ENCODE measurements at regions of chr4 and their contacts with region 1.

Region 1: DNA sequence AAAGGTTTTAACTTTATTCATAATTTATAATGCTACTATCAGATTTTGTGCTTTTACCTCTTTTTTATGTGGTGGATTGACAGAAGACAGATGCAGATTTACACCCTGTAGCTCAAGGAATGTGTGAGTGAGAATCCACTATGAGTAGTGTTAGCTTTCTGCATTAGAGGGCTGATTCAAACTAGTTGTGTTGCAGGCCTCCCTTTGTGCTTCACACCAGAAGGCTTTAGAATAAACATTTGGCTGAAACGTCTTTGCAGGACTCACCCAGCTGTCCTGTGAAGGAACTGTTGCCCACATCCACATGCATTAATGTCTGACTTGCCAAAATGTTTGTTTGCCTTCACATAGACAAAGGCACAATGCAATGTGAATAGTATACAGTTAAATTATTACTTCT is 127.0 kb downstream of the PCDH7 start:
- DNase-seq: no peak
- H3K4me3 ChIP-seq: no peak overlapping the region
- H3K27ac ChIP-seq: no peak overlapping the region
- H3K4me1 ChIP-seq: no peaks in the 10 kb centered on the region
- H3K27me3 ChIP-seq: no peaks in the 10 kb centered on the region
- CTCF ChIP-seq: no peak

Region 2: DNA sequence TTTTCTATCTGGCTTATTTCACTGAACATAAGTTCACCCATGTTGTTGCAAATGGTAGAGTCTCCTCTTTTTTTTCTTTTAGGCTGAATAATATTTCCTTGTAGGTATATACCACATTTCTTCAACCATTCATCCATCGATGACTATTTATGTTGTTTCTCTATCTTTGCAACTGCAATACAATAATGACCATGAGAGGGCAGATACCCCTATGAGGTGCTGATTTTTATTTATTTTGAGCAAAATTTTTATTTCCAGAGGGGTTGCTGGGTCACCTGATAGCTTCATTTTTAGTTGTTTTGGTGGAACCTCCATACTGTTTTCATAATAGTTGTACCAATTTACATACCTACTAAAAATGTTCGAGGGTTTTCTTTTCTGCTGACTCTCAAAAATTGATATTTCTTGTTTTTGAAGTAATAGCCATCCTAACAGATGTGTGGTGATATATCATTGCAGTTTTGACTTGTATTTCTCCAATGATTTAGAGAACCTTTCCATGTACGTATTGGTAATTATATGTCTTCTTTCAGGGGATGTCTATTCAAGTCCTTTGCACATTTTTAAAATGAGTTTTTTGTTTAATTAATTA is 1570.0 kb after region 1 on chr4:
- CTCF ChIA-PET with region 1: no interaction called
- POLR2A ChIA-PET with region 1: interaction called, 10 read pairs
- intact Hi-C with region 1: no loop called
- DNase-seq: no peak
- H3K4me3 ChIP-seq: no peak overlapping the region
- H3K27ac ChIP-seq: no peak overlapping the region
- H3K4me1 ChIP-seq: no peaks in the 10 kb centered on the region
- H3K27me3 ChIP-seq: no peaks in the 10 kb centered on the region
- CTCF ChIP-seq: peak; percentile 48

Measured in PC-9 (cell line).